Heart right ventricle (tissue), 16 donors: ENCODE measurements at regions of chr14 and their contacts with region 1.

Region 1: DNA sequence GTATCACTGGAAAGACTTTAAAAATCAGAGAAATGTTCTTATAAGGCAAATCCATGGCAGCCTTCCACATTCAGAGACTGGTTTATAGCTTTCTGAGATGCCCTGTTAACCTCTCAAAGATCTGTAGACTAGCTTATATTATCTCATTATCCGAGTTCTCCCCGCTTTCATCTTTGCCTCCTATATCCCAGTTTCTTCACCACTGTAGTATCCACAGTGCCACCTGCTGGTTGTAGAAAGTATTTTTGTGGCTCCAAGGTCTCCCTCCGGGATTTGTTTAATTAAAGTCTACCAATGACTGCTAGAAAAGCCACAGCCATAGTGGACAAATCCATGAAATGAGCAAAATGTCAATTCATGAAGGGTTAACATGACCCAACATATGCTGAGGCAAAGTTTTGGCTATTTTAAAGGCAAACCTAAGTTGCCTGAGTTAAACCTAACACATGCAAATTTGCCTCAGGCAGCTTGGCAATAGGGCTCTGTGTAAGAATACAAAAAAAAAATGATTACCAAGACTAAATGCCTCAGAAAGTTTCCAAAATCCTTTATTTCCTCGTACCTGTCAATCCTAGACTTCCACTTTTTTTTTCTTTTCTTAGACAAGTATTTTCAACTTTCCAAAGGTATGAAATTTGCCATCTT is 218.8 kb upstream of the BMP4 start:
- DNase-seq: peak in 1 of 2 donors; percentile 78
- ATAC-seq: peak in 7 of 8 donors; percentile 46 to 79 (median 59)
- H3K4me3 ChIP-seq: no peak overlapping the region
- H3K27ac ChIP-seq: peak overlapping the region in 3 of 10 donors; percentile 54 to 82 (median 67)
- H3K4me1 ChIP-seq: peaks cover 5 to 52% (median 33%) of the 10 kb centered on the region in 9 donors
- H3K27me3 ChIP-seq: peaks cover 0 to 7% (median 0%) of the 10 kb centered on the region in 7 donors
- CTCF ChIP-seq: peak; percentile 59 to 89 (median 82)

Region 2: DNA sequence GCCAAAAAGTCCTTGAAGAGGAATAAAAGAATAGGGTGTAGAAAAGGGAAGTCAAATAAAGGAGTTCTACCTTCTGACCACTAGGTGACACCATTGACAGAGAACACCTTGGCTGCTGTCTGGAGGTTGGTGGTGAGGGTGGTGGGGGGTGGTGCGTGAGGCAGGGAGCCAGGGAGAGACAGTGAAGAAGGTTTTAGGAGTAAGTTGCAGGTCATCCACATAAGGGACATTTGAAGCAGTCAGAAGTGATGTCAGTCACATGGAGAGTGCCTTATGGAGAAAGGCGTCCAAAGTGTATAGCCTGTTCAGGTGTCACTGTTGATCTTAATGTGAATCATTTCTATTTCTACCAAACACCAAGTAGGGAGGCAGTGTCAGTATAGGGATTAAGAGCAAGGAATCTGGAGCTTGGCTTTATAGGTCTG is 743.0 kb before region 1 on chr14:
- intact Hi-C with region 1: loop called in 2 of 10 experiments (anchors 5 to 10 kb)
- DNase-seq: no peak
- ATAC-seq: peak in 4 of 8 donors; percentile 44 to 77 (median 54)
- H3K4me3 ChIP-seq: no peak overlapping the region
- H3K27ac ChIP-seq: no peak overlapping the region
- H3K4me1 ChIP-seq: no peaks in the 10 kb centered on the region
- H3K27me3 ChIP-seq: no peaks in the 10 kb centered on the region
- CTCF ChIP-seq: peak in 8 of 9 donors; percentile 33 to 62 (median 54)

Region 3: GRCh38 chr14:54211551-54212308 is 36.3 kb after region 1 on chr14:
- intact Hi-C with region 1: no loop called
- DNase-seq: no peak
- ATAC-seq: peak in 7 of 8 donors; percentile 28 to 86 (median 70)
- H3K4me3 ChIP-seq: no peak overlapping the region
- H3K27ac ChIP-seq: peak overlapping the region in 8 of 10 donors; percentile 22 to 70 (median 58)
- H3K4me1 ChIP-seq: peaks cover 0 to 10% (median 0%) of the 10 kb centered on the region in 9 donors
- H3K27me3 ChIP-seq: peaks cover 0 to 13% (median 0%) of the 10 kb centered on the region in 7 donors
- CTCF ChIP-seq: no peak

Region 4: DNA sequence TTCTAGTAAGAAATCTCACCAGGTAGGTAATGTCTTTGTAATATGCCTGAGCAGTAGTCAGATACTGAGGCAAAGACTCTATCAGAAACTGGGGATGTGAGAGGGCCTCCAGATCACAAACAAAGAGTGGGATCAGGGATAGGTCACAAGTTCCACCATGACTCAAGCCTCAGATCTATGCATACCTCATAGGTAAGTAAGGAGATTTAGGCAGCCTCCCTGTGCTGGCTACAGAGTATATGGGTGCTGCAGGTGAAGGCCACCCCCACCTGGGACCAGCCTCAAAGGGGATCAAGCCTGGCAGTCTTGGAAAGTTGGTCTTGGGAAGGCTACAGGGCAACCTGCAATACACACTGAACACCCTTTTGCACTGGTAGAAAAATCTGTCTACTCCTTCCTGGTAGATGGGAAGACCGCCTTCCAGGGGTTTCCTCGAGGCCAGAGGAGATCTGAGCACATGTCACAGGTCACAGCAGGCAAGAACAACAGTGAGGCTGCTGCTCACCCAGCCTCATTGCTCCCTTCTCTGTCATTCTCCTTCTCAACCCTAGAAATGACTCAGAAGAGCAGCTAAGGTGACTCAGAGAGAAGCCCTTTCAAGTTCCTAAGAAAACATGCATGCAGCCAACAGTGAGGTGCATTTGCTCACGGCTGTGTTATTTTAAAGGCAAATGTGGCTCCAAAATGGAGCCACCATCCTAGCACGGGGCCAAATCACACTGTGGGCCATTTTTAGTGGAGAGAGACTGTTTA is 78.0 kb after region 1 on chr14:
- intact Hi-C with region 1: no loop called
- DNase-seq: no peak
- ATAC-seq: no peak
- H3K4me3 ChIP-seq: no peak overlapping the region
- H3K27ac ChIP-seq: no peak overlapping the region
- H3K4me1 ChIP-seq: no peaks in the 10 kb centered on the region
- H3K27me3 ChIP-seq: peaks cover 0 to 6% (median 0%) of the 10 kb centered on the region in 7 donors
- CTCF ChIP-seq: no peak

Region 5: DNA sequence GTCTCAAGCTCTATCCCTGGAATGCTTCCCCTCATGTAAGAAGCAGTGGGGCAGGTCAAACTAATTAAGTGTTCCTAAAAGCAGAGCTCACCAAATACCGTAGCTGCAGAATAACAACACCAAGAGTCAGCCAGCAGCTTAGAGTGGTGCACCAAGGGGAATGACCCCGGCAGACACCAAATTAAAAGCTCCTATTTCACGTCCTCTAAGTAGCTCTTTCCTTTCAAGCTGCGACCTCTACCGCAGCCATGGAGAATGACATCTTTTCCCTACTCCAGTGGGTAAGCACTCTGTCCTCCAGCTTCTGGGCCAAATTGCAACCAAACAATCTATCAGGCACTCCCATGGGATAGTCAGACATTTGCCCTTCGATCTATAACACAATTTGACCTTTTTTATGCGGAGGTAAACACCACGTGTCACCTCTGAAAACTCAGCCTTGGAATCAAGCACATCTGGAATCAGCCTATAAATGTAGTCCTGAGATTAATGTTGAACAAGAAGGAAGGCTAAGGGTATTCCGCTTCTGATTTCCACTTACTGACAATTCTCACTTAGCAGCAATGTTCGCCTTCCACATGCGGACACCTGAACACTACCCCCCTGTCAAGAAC is 153.8 kb after region 1 on chr14:
- intact Hi-C with region 1: loop called in 4 of 10 experiments (anchors 10 kb)
- DNase-seq: peak in 1 of 2 donors; percentile 47
- ATAC-seq: peak; percentile 64 to 91 (median 82)
- H3K4me3 ChIP-seq: no peak overlapping the region
- H3K27ac ChIP-seq: peak overlapping the region in 2 of 10 donors; percentile 22 to 27
- H3K4me1 ChIP-seq: peaks cover 0 to 13% (median 5%) of the 10 kb centered on the region in 9 donors
- H3K27me3 ChIP-seq: no peaks in the 10 kb centered on the region
- CTCF ChIP-seq: peak in 8 of 9 donors; percentile 45 to 81 (median 75)

Region 6: DNA sequence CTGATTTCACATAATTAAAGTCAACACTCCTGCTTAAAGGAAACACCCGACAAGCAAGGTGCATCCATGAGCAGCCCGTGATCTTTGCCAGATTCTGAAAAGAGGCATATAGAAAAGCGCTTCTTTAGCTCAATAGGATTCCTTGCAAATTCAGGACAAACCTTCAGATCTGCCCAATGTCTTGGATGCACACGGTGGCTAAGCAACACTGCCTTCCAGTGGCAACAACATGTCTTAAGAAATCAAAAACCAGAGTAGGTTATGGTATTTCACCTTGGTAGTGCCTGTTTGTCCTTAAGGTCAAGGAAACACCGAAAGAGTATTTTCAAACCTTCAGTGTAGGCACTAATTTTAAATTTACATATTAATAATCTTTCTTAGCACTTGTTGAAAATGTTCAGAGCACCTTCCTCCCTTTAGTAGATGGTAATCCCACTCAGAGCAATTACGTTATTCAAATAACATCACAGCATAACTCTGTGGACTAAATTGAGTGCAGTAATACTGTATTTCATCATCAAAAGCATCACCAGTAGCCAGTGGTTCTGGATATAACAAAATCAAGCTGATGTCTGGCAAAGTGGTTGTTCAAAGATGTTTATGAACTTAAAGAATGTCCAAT is 163.4 kb after region 1 on chr14:
- intact Hi-C with region 1: loop called in 5 of 10 experiments (anchors 10 kb)
- DNase-seq: no peak
- ATAC-seq: peak in 1 of 8 donors; percentile 40
- H3K4me3 ChIP-seq: no peak overlapping the region
- H3K27ac ChIP-seq: no peak overlapping the region
- H3K4me1 ChIP-seq: peaks cover 0 to 12% (median 4%) of the 10 kb centered on the region in 9 donors
- H3K27me3 ChIP-seq: peaks cover 0 to 9% (median 0%) of the 10 kb centered on the region in 7 donors
- CTCF ChIP-seq: peak in 5 of 9 donors; percentile 26 to 45 (median 39)

Region 7: DNA sequence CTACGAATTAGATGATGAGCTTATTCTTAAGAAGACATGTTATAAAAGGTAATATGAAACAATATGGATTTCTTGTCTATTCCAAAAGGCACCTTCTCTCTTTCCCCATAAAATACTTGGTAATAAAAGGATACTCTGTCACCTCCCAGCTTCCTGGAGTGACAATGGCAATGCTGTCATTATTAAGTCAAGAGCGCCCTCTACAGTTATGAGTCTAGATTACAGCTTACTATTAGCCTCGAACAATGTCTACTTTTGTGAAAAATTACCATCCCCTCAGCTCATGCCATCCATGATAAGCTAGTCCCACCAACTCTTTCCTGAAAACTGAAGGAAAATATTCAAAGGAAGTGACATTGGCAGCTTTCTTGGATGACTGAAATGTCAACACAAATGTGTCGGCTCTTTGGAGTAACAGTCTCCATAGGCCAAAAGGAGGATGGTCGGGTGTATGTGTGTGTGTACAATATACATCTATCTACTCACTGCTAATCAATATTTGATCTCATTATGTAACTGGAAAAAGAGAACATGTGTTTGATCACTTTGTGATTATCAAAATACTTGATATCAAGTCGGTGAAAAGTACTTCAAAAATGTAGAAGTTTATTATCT is 172.7 kb after region 1 on chr14:
- intact Hi-C with region 1: loop called in 3 of 10 experiments (anchors 10 kb)
- DNase-seq: peak in 1 of 2 donors; percentile 32
- ATAC-seq: peak in 6 of 8 donors; percentile 41 to 57 (median 50)
- H3K4me3 ChIP-seq: no peak overlapping the region
- H3K27ac ChIP-seq: peak overlapping the region in 4 of 10 donors; percentile 66 to 83 (median 80)
- H3K4me1 ChIP-seq: peaks cover 0 to 27% (median 21%) of the 10 kb centered on the region in 9 donors
- H3K27me3 ChIP-seq: no peaks in the 10 kb centered on the region
- CTCF ChIP-seq: peak; percentile 55 to 89 (median 75)